PC-3 (cell line): ENCODE measurements at regions of chr3 and their contacts with region 1.

Region 1: GRCh38 chr3:53195602-53196574 is 34.9 kb downstream of the PRKCD start:
- DNase-seq: peak; percentile 65
- ATAC-seq: peak; percentile 52
- H3K4me3 ChIP-seq: no peak overlapping the region
- H3K27ac ChIP-seq: no peak overlapping the region
- H3K4me1 ChIP-seq: peaks cover 29% of the 10 kb centered on the region
- H3K27me3 ChIP-seq: no peaks in the 10 kb centered on the region
- CTCF ChIP-seq: peak; percentile 99

Region 2: GRCh38 chr3:53213276-53213675 is 17.4 kb after region 1 on chr3:
- CTCF ChIA-PET with region 1: no interaction called
- POLR2A ChIA-PET with region 1: interaction called, 19 read pairs
- intact Hi-C with region 1: no loop called
- DNase-seq: no peak
- ATAC-seq: no peak
- H3K4me3 ChIP-seq: no peak overlapping the region
- H3K27ac ChIP-seq: no peak overlapping the region
- H3K4me1 ChIP-seq: no peaks in the 10 kb centered on the region
- H3K27me3 ChIP-seq: no peaks in the 10 kb centered on the region
- CTCF ChIP-seq: no peak